K562 (cell line): ENCODE measurements at regions of chr19 and their contacts with region 1.

Region 1: GRCh38 chr19:39403331-39404312 is 3.0 kb upstream of the ZFP36 start:
- DNase-seq: peak; percentile 59 to 91 (median 70)
- ATAC-seq: peak; percentile 51
- H3K4me3 ChIP-seq: peak overlapping the region; percentile 41
- H3K27ac ChIP-seq: peak overlapping the region; percentile 98
- H3K4me1 ChIP-seq: peaks cover 61 to 77% of the 10 kb centered on the region in 2 experiments
- H3K27me3 ChIP-seq: no peaks in the 10 kb centered on the region
- CTCF ChIP-seq: no peak
- EP300 ChIP-seq: no peak
- POLR2A ChIP-seq: peak; percentile 55; the same call in 1 of the 2 replicates
- RAD21 ChIP-seq: no peak

Region 2: DNA sequence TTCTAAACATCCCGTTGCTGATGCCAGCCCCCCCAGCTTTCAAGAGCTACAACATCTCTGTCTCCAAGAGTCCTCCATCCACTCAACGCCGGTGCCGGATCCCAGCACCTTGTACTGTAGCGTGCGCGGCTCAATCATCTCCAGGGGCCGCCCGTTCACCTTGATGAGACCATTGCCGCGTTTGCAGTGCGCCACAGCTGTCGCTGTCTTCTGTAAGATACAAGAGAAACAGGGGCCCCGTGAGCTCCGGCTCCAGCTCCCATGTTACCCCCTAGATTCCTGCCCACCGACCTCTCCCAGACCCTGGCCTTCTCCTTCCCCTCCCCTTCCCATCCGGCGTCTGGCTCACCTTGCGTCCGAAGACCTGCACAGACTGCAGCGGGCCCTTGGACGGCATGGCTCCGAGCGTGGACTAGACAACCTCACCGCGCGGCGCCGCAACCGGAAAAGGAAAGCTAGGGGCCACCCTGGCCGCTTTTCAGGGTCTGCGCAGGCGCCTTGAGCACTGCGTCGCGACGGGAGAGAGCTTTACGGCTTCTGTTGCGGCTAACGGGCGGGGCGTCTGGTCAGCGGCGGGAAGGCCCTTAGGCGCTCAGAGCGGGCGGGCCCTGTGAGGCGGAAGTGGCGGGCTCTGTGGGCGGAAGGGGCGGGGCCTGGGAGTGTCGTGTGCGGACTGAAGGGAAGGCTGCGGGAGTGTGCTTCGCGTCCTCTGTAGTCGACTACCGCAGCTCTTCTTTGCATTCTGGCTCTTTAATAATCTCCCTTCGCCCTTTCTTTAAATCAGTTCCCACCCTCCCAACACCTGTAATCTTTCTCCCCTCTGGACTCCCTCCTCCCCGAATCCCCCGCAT is 32.1 kb after region 1 on chr19 and contains the start of gene RPS16:
- CTCF ChIA-PET with region 1: no interaction called
- POLR2A ChIA-PET with region 1: interaction called, 18 read pairs
- in situ Hi-C with region 1: no loop called
- intact Hi-C with region 1: no loop called
- DNase-seq: peak; percentile 95 to 99 (median 95)
- ATAC-seq: peak; percentile 88
- H3K4me3 ChIP-seq: peak within 1 kb of the TSS; percentile 100
- H3K27ac ChIP-seq: peak within 1 kb of the TSS; percentile 95
- H3K4me1 ChIP-seq: peaks cover 25 to 29% of the 10 kb centered on the region in 2 experiments
- H3K27me3 ChIP-seq: no peaks in the 10 kb centered on the region
- CTCF ChIP-seq: no peak
- EP300 ChIP-seq: no peak
- POLR2A ChIP-seq: peak; percentile 99
- RAD21 ChIP-seq: no peak
- polyA plus RNA-seq, gene RPS16: 2,545 to 3,175 TPM